Posterior vena cava (tissue), 2 donors: ENCODE measurements at regions of chr18 and their contacts with region 1.

Region 1: DNA sequence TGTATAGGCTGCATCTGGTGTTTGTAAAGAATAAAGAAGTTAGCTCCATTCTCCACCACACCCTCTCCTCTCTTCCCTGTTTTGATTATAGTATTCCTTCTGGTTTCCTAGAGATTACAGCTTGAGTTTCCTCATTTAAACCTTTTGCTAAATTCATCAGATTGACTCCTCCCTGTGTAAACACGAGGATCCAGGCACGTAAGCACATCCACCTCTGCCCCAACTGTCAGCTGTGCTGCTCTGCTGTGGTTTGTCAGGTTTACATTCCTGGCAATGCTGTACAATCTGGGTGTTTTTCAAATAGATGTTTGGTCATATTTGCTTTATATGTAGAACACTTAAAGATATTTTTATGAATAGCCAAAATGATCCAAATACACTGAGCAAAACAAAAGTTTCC is 302.8 kb downstream of the PTGR3 start:
- DNase-seq: no peak

Region 2: DNA sequence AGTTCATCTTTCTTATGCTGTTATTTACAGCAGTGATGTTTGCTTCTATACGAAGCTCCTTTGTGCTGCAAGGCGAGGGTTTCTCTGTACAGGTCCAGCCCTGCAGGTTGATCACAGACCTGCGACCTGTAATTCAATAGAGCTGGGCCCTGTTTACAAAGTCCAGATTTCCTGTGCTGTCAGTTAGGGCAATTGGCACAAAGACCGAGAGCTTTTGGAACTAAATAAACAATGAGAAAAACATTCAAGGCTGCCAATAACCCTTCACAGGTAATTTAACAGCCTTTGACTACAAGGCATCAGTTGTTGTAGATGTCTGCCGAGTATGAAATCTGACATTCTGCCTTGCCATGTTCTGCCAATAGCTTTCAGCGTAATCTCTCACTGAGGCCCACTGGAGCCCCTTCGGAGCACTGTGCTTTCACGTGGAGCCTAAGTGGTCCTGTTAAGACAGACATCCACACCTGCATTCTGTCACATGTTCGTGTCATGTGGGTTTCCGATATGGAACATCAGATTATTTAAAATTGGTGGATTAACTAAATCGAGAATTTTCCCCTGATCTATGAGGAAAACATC is 70.2 kb after region 1 on chr18:
- intact Hi-C with region 1: no loop called
- DNase-seq: no peak

Region 3: DNA sequence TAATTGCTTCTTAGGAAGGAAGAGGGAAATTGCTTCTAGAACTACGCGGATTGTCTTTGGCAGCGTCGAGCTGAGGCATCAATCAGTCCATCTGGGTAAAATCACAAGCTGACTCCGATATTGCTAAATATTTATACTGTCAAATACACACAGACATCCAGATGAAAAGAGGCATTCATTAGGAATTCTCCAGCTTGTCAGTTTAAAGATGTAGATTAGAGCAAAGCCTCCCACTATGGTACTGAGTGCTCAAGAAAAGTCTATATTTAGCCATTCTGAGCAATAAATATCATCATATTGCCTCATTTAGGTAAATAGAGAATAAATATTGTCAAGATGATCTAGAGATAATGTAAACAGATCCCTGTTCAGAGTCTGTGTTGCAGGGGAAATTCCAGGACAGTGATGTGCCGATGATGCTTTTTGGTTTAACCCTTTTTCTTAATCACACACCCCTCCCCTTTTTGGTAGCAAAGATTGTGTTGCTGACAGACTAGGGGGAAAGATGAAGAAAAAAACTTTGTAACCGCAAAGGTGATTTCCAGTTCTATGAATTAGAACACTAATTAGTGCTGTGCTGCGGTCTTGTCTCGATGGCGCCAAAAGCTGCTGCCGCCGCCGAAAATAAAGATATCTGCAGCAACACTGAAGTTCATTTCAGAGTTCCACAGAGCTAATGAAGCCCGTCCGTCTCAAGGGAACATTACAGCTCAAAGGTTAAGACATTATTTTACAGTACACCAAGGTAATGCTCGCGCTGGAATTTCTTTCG is 130.9 kb after region 1 on chr18:
- intact Hi-C with region 1: loop called in 1 of 2 experiments (anchors 10 kb)
- DNase-seq: no peak